ENCODE measurements at regions of chr17 and their contacts with region 1.

Region 1: GRCh38 chr17:57243171-57243948 is 13.0 kb upstream of the MSI2 start:
- DNase-seq: peak; percentile 83
- ATAC-seq: peak; percentile 92
- H3K4me3 Mint-ChIP-seq: no peak overlapping the region
- H3K27ac Mint-ChIP-seq: no peak overlapping the region
- H3K4me1 Mint-ChIP-seq: peaks cover 6% of the 10 kb centered on the region
- H3K27me3 Mint-ChIP-seq: no peaks in the 10 kb centered on the region; the same call in none of the 2 replicates
- CTCF ChIP-seq: peak; percentile 92

Region 2: GRCh38 chr17:57130761-57131461 is 112.4 kb before region 1 on chr17:
- CTCF ChIA-PET with region 1: interaction called, 21 read pairs
- POLR2A ChIA-PET with region 1: no interaction called
- DNase-seq: peak; percentile 88
- ATAC-seq: peak; percentile 76
- H3K4me3 Mint-ChIP-seq: no peak overlapping the region
- H3K27ac Mint-ChIP-seq: no peak overlapping the region
- H3K4me1 Mint-ChIP-seq: peaks cover 30% of the 10 kb centered on the region
- H3K27me3 Mint-ChIP-seq: no peaks in the 10 kb centered on the region
- CTCF ChIP-seq: peak; percentile 92

Region 3: DNA sequence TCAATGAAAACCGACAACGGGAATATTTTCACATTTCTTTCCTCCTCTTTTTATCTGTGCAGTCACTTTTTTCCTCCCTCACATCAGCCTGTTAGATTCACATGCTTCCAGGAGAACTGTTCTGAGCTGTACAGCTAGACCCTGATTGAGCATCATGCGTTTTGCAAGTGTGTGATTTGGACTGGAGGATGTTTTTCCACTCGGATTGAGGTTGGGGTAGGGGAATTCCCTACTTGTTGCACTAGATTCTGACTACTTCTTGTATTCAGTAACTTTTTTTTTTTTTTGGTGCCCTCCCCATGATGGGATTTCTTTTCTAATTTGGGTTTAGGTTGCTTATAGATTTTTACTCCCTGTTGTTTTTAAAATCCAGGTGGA is 17.7 kb after region 1 on chr17:
- CTCF ChIA-PET with region 1: interaction called, 39 read pairs
- POLR2A ChIA-PET with region 1: interaction called, 3 read pairs
- DNase-seq: no peak
- ATAC-seq: no peak
- H3K4me3 Mint-ChIP-seq: peak overlapping the region; percentile 93; the same call in 1 of the 2 replicates
- H3K27ac Mint-ChIP-seq: no peak overlapping the region; the same call in 1 of the 2 replicates
- H3K4me1 Mint-ChIP-seq: peaks cover 42% of the 10 kb centered on the region
- H3K27me3 Mint-ChIP-seq: no peaks in the 10 kb centered on the region; the same call in none of the 2 replicates
- CTCF ChIP-seq: no peak

Region 4: GRCh38 chr17:57284984-57285646 is 41.8 kb after region 1 on chr17:
- CTCF ChIA-PET with region 1: interaction called, 12 read pairs
- POLR2A ChIA-PET with region 1: no interaction called
- DNase-seq: peak; percentile 44
- ATAC-seq: peak; percentile 60
- H3K4me3 Mint-ChIP-seq: peak overlapping the region; percentile 31
- H3K27ac Mint-ChIP-seq: peak overlapping the region; percentile 93
- H3K4me1 Mint-ChIP-seq: peaks cover 83% of the 10 kb centered on the region
- H3K27me3 Mint-ChIP-seq: no peaks in the 10 kb centered on the region
- CTCF ChIP-seq: no peak

Region 5: DNA sequence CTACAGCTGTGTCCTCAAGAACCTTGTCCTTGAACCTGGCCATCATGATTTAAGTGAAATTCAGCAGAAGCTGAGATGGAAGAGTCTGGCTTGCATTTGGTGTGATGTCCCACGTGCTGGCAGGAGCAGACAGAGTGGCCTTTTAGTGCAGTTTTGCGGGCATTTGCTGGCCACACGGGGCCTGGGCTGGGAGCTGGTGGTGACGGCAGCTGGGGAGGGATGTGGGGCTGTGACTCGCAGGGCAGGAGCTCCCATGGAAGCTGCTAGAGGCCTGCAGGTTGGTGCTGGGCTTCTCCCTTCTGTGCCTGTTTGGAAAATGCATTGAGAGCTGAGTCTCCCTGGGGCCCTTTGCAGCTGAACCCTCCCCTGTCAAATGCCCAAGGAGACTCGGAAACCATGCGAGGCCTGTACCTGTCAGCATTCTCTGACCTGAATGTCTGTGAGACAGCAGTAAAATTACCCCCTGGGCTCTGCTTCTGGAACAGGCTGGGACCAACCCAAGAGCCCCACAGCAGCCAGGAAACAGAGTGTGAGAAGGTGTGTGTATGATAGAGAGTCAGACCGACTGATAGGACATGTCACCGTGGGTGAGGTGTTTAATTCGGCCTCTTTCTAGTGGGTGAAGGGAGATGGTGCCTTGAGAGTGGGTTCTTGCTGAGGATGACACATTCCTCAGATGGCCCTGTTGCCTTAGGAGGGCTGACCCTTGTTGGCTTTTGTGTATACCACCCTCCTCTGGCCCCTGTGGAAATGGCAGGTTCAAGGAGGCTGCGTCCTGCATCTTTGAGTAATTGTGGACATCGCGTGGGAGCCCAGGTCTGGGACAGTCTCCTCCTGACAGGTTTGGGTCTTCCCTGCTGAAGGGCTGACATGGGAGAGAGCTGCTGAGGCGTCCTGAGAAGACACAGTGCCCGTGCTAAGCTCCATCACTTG is 158.5 kb after region 1 on chr17:
- CTCF ChIA-PET with region 1: interaction called, 32 read pairs
- POLR2A ChIA-PET with region 1: no interaction called
- DNase-seq: peak; percentile 49
- ATAC-seq: peak; percentile 83
- H3K4me3 Mint-ChIP-seq: no peak overlapping the region
- H3K27ac Mint-ChIP-seq: no peak overlapping the region
- H3K4me1 Mint-ChIP-seq: peaks cover 32% of the 10 kb centered on the region
- H3K27me3 Mint-ChIP-seq: no peaks in the 10 kb centered on the region
- CTCF ChIP-seq: no peak

Region 6: DNA sequence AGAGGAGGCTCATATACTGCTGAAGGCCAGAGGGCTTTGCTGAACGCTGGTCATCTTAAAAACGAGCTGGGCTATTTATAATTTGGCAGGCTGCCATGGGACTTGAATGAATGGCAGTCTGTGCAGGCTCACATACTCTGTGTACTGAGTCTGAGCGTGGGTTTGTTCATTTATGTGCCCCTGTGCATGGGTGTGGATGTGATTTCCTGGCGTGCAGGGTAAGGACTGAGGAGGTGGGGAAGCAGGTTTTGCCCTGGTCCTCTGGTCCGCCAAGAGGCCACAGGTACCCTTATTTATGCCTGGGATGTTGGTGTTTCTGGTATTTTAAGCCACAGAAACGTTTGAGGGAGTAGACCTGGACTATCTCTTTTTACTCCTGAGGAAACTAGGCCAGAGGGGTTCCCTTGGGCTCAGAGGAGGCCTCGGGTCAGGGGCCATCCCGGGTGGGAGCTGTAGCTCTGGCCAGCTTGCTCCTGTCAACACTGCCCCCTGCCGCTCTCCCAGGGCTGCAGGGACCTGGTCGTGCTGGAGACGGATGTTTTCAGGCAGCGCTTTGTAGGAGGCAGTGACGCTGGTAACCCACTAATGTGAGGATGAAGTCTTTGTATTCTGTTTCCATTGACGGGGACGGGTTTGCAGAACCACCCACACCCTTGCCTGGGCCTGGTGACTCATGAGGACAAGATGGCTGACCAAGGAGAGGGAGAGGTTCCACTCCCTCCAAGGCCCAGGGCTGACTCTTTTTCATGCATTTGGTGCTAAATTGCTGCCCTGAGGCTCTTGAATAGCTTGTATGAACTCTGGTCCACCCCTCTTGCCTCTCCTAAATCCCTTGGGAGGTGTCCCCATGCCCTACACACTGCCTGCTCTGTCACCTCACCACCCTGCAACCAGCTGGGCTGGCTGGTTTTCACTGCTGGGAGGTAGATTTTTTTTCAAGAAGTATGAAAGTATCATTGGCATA is 197.4 kb after region 1 on chr17:
- CTCF ChIA-PET with region 1: interaction called, 40 read pairs
- POLR2A ChIA-PET with region 1: no interaction called
- DNase-seq: peak; percentile 74
- ATAC-seq: peak; percentile 87
- H3K4me3 Mint-ChIP-seq: no peak overlapping the region
- H3K27ac Mint-ChIP-seq: peak overlapping the region; percentile 47
- H3K4me1 Mint-ChIP-seq: peaks cover 66% of the 10 kb centered on the region
- H3K27me3 Mint-ChIP-seq: no peaks in the 10 kb centered on the region
- CTCF ChIP-seq: peak; percentile 36; the same call in 1 of the 2 replicates

Region 7: GRCh38 chr17:57577751-57578607 is 334.6 kb after region 1 on chr17:
- CTCF ChIA-PET with region 1: interaction called, 13 read pairs
- POLR2A ChIA-PET with region 1: no interaction called
- DNase-seq: no peak
- ATAC-seq: peak; percentile 61
- H3K4me3 Mint-ChIP-seq: peak overlapping the region; percentile 20; the same call in 1 of the 2 replicates
- H3K27ac Mint-ChIP-seq: 0 out of 2 replicates have a peak overlapping the region, but pooled peaks have one; percentile 28
- H3K4me1 Mint-ChIP-seq: peaks cover 27% of the 10 kb centered on the region
- H3K27me3 Mint-ChIP-seq: no peaks in the 10 kb centered on the region
- CTCF ChIP-seq: no peak

Measured in WTC11 (cell line).